Posterior cingulate gyrus (tissue), 11 donors: ENCODE measurements at regions of chr15 and their contacts with region 1.

Region 1: GRCh38 chr15:58066042-58066867 is 744 bp upstream of the ALDH1A2 start:
- DNase-seq: peak in 8 of 10 donors; percentile 14 to 92 (median 32)

Region 2: DNA sequence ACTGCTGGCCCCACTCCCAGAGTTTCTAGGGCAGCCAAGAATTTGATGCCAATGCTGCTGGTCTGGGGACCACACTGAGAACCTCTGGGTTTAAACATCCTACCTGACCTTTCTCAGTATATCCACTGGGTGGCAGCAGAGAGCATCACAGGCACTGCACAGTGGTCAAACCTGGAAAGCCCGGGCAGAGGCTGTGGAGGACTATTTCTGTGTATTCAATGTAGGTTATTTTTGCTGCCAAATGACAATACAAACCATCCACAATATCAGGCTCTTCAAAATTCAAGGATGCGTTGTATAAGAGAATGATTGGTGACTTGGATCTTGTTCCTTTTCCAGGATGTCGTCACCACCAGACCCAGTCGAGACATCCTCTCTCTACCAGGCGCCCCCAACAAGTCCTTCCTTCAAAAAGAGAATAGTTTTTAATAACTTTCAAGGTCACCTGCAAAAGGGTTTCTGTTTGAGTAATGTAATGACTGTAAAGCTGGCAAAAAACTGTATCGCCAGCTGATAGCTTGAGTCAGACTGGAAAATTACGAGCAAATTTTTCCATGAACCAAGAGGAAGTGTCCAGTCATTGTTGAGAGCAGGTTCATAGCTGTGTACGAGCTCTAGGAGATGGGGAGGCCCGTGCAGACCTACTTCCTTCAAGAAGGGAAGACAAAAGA is 505.1 kb before region 1 on chr15:
- intact Hi-C with region 1: loop called (anchors 5 kb)
- DNase-seq: peak in 7 of 10 donors; percentile 33 to 94 (median 68)

Region 3: DNA sequence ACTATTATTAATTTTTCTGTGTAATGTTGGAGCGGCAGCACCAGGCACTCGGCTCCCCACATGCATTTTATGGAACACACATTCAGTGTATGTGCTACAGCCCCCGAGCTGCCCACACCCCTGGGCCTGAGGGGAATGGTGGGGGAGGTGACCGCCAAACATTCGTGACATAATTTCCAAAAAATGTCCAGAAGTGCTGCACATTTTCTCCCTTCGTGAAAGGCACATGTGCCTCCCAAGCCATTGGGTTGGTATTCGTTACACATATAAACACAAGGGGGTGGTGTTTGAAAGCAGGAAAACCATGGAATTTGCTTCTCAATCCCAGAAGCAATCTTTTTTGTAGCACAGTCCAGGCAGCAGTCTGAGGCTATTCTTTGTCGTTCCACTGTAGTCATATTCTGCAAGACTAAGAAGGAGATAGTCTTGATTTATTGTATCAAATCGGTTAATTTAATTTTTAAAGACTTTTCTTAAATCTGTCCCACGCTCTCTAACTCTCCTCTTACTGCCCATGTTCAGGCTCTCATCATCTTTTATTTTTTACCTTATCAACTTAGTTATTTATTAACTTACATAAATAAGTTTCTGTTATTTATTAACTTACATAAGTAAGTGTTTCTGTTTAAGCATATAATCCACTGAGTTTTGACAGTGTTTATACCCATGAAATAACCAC is 398.9 kb before region 1 on chr15:
- intact Hi-C with region 1: loop called (anchors 10 kb)
- DNase-seq: no peak

Region 4: DNA sequence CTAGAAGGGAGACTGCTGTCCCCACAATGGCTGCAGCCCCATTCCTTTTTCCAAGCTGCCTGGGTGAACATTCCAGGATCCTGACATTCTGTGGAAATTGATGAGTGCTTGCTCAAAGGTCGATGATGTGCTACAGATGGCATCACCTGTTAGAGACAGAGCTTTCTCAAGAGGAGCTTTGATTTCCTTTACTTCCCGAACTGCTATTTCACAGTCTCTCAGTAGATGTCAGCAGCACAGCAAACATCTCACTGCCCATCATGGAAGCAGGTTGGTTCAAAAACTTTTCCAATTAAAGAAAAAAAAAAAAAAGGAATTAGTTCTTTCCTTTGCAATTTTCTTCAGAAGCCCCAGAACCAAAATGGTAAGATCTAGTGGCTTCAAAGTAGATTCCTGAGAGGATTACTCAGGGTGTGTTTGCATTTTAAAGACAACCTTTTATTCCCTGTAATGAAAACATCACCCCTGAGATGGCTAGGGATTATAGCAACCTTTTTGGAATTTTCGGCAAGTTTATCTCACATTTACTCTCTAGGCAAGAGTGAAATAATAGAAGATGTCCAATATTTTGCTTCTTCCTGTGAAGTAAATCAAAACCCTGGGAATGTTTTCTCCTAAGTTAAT is 315.0 kb before region 1 on chr15:
- intact Hi-C with region 1: loop called (anchors 5 kb)
- DNase-seq: peak in 1 of 10 donors; percentile 30

Region 5: DNA sequence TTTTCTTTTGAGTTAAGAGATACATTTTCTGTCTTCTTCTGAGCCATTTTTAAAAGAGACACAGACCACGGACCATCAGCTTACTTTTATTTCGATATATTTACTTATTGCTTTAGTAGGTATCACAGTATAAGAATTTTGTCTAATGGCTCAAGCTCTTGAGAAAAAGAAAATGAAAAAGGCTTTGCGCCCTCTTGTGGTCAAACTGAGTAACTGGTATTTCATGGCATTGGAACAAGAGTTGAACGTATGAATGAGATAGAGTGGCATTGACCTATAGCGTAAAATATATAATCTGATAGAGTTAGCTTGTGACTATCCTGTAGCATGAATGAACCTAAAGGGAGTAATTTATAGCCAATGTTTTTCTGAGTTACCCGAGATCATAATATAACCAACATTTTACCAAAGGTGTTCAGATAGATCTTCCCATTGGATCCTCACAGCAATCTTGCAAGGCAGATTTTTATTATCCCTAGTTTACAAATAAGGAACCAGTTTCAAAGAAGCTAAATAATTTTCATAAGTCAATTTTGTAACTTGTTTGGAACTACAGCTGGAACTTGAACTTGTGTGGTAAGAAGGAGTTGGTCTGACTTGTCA is 205.1 kb before region 1 on chr15:
- intact Hi-C with region 1: loop called (anchors 2 kb)
- DNase-seq: peak in 1 of 10 donors; percentile 39

Region 6: GRCh38 chr15:58056015-58056414 is 10.2 kb before region 1 on chr15:
- intact Hi-C with region 1: no loop called
- DNase-seq: no peak

Region 7: DNA sequence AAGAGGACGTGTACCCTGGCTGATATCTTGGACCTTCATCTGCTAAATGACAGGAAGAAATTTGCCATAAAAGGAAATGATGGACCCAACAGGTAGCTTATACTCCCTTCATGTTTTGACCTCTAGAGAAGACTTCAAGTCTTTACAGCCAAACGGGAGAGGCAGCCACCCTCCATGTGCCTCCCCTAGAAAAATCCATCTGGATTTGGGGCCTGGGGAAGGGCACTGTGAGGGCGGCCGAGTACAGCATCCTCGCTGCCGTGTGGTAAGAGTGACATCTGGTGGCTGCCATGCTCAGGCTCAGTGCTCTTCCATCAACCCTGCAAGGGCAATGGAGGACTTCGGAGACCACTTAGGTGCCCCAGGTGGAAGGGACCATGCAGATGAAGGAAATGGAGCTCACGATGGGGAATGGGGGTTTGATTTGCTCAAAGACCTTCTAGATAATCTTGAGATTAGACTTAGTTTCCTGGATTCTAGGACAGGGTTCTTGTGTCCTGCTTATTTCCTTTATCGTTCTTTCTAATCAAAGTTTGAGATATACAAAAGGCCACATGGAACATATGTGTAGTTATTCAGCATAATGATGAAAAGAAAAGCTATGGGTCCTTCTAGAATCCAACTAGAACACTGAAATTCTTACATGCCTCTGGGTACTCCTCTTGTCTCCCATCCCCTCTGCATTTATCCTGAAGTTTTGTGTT is 116.4 kb after region 1 on chr15:
- intact Hi-C with region 1: loop called (anchors 10 kb)
- DNase-seq: peak in 9 of 10 donors; percentile 24 to 91 (median 55)